ENCODE measurements at regions of chr17 and their contacts with region 1.

Region 1: DNA sequence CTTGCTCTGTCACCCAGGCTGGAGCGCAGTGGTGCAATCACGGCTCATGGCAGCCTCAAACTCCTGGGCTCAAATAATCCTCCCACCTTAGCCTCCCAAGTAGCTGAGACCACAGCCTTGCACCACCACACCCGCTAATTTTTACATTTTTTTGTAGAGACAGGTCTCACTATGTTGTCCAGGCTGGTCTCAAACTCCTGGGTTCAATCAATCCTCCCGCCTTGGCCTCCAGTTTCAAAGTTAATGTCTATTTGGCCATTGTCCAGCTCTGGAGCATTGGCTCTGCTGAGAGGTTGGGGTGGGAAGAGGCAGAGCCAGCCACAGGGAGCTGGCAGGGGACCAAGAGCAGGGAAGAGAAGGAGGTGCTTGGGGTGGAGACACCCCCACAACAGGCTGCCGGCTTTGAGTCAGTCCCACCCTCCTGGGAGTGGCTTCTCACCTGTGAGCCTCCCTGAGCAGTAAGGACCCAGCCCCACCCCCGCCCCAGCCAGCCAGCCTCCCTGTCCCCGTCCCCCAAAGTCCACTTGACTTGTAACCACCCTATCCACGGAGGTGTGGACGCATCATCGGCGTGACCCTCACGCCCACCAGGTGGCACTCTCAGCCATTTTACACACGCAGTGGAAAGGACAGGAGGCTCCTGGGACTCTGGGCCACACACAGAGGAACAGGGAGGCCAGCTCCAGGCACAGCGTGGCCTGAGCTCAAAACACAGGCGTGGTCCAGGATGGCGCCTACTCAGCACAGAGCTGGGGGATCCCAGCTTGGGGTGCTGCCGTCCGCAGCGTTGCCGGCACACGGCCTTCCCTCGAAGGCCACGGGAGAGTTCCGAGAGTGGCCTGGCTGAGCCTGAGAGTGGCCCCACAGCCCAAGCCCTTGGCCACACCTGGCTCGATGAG is 22.8 kb upstream of the PVALEF start:
- DNase-seq: peak; percentile 90
- ATAC-seq: peak; percentile 97

Region 2: GRCh38 chr17:80981062-80981902 is 161.3 kb before region 1 on chr17:
- intact Hi-C with region 1: no loop called
- DNase-seq: no peak
- ATAC-seq: peak; percentile 70

Region 3: GRCh38 chr17:81114351-81115093 is 28.0 kb before region 1 on chr17:
- intact Hi-C with region 1: no loop called
- DNase-seq: no peak
- ATAC-seq: no peak

Region 4: DNA sequence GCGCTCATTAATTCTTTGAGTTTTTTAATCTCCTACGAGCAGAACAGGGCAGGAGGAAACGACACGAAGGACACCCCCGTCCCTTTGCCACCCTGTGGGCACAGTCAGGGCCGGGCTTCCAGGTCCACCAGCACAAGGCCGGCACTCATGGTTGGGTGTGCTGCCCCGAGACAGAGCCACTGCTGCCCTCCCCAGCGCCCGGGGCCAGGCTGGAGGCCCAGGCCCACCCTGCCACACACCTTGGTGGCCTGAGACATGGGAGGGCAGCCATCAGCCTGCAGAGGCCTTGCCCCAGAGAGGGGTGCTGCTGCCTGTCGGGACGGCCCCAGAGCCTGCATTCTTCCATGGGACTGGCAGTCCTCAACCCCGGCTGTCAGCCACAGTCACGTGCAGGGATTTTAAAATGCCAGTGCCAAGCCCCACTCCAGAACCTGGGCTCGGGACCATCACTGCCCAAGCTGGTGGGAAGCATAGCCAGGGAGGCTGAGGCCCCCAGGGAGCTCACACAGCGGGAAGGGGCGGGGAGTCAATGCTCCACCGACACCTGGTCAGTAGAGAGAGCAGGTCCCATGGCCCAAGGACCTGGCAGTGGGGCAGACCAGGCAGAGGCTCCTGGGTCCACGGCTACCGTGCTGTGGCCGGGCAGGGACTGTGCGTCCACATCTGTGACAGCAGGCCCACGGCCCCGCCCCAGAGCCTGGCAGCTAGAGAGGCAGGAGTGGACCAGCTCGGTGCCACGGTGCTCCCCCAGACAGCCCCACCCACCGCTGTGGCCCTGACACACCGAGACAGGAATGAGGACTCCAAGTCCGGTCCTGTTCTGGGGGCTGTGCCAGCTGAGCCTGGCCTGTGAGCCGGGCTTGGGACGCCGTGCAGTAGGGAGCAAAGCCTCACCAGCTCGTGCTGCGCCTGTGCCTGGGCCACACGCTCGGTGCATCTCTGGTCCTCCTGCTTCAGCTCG is 52.7 kb after region 1 on chr17:
- intact Hi-C with region 1: no loop called
- DNase-seq: peak; percentile 84
- ATAC-seq: peak; percentile 88

Region 5: GRCh38 chr17:81241648-81242420 is 99.3 kb after region 1 on chr17:
- intact Hi-C with region 1: loop called (anchors 2 kb)
- DNase-seq: no peak
- ATAC-seq: no peak

Region 6: DNA sequence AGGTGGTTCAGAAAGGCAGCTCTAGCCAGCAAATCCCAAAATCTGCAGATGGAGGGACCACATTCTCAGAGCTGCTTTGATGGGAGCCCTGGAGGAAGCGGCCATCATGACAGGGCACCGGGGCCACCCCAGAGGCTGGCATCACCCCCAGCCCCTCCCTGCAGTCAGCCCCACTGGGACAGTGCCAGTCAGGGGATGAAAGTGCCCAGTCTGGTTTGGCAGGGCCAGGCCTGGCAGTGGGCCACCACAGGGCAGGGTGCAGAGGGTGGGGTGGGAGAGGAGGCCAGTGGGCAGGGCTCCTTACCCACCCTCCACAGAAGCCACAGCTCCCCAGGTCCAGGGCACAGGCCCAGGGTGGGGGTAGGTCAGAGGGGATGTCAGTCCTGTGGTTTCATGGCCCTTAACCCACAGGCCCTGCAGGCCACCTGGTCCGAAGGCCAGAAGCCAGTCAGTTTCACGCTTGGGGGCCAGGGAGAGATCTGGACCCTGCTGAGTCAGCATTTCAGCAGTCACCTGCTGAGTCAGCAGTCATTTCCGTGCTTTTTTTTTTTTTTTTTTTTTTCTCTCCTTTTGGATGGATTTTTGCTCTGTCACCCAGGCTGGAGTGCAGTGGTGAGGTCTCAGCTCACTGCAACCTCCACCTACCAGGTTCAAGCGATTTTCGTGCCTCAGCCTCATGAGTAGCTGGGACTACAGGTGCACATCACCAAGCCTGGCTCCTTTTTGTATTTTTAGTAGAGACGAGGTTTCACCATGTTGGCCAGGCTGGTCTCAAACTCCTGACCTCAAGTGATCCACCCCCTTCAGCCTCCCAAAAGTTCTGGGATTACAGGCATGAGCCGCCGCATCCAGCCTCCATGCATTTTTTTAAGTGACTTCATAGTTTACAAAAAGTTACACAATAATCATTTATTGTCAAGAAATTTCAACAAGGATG is 579.9 kb after region 1 on chr17:
- intact Hi-C with region 1: no loop called
- DNase-seq: no peak
- ATAC-seq: peak; percentile 84